MCF 10A (cell line): ENCODE measurements at regions of chr13 and their contacts with region 1.

Region 1: DNA sequence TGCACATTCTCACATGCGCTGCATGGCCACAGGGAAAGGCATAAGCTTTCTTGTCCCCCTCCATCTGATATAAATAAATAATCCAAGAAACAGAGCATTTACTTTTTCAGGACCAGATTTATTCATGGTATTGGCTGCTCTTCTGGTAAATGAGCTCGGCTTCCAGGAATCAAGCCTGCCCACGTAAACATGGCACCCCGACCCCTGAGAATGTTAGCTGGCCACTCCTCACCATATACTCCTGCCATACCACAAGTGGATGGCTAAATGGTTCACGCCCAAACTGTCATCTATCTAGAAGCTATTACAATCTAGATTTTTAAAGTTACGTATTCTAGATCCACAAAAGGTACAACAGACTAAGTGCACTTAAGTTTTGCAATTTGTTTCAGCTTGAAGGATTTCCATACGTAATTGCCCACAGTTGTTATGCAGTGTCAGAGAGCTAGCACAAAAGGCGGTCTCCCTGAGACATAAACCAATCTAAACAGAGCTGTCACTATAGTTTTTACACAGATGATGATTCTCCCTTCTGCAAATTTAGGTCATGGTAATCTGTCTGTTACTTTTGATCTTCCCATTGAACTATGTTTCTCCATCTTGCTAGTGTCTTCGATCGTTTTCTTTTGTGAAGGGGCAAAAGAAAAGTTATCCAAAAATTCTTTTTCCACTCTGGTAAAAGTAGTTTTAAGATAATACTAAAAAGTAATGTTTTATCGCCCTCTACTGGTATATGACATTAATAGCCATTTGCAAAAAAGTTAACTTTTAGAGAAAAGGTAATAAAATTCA is 16.2 kb upstream of the FOXO1 start:
- DNase-seq: peak; percentile 25
- H3K4me3 Mint-ChIP-seq: no peak overlapping the region
- H3K27ac Mint-ChIP-seq: peak overlapping the region; percentile 13
- H3K4me1 Mint-ChIP-seq: peaks cover 14% of the 10 kb centered on the region
- H3K27me3 Mint-ChIP-seq: no peaks in the 10 kb centered on the region
- CTCF ChIP-seq: peak; percentile 49

Region 2: GRCh38 chr13:39684531-39685137 is 998.0 kb before region 1 on chr13:
- CTCF ChIA-PET with region 1: interaction called, 84 read pairs
- POLR2A ChIA-PET with region 1: interaction called, 3 read pairs
- intact Hi-C with region 1: loop called (anchors 2 kb)
- DNase-seq: peak; percentile 39
- H3K4me3 Mint-ChIP-seq: no peak overlapping the region
- H3K27ac Mint-ChIP-seq: no peak overlapping the region
- H3K4me1 Mint-ChIP-seq: no peaks in the 10 kb centered on the region
- H3K27me3 Mint-ChIP-seq: no peaks in the 10 kb centered on the region
- CTCF ChIP-seq: peak; percentile 18

Region 3: GRCh38 chr13:39765801-39766463 is 916.7 kb before region 1 on chr13:
- CTCF ChIA-PET with region 1: interaction called, 42 read pairs
- POLR2A ChIA-PET with region 1: no interaction called
- intact Hi-C with region 1: loop called (anchors 5 kb)
- DNase-seq: peak; percentile 91
- H3K4me3 Mint-ChIP-seq: no peak overlapping the region
- H3K27ac Mint-ChIP-seq: no peak overlapping the region
- H3K4me1 Mint-ChIP-seq: peaks cover 32% of the 10 kb centered on the region
- H3K27me3 Mint-ChIP-seq: no peaks in the 10 kb centered on the region
- CTCF ChIP-seq: peak; percentile 48

Region 4: DNA sequence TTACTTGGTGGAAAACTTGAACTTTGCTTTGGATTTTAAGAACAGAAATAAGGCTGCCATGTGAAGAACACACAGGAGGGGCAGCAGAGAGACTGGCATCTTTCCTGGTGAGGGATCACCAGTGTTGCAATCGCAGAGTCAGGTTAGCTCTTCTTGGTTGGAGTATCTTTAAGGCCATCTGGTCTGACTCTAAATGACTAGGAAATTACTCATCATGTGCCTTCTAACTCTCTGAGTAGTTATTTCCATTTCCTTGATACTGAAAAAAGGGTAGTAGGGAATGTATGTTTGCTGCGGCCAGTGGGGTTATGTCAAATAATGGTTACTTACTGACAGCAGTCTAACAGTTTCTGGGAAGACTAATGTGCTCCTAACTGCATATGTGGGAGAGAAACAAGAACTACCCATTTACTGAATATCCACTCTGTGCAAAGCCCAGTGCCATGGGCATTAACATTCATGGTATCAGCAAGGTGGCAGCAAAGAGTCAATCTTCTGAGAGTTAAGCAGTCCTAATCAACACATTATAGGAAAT is 905.1 kb before region 1 on chr13:
- CTCF ChIA-PET with region 1: interaction called, 50 read pairs
- POLR2A ChIA-PET with region 1: interaction called, 10 read pairs
- intact Hi-C with region 1: loop called (anchors 2 kb)
- DNase-seq: peak; percentile 90
- H3K4me3 Mint-ChIP-seq: no peak overlapping the region
- H3K27ac Mint-ChIP-seq: peak overlapping the region; percentile 31
- H3K4me1 Mint-ChIP-seq: peaks cover 10% of the 10 kb centered on the region
- H3K27me3 Mint-ChIP-seq: no peaks in the 10 kb centered on the region
- CTCF ChIP-seq: peak; percentile 23

Region 5: GRCh38 chr13:39783050-39783449 is 899.6 kb before region 1 on chr13:
- CTCF ChIA-PET with region 1: interaction called, 50 read pairs
- POLR2A ChIA-PET with region 1: interaction called, 10 read pairs
- intact Hi-C with region 1: loop called (anchors 2 kb)
- DNase-seq: peak; percentile 36
- H3K4me3 Mint-ChIP-seq: no peak overlapping the region
- H3K27ac Mint-ChIP-seq: no peak overlapping the region
- H3K4me1 Mint-ChIP-seq: peaks cover 6% of the 10 kb centered on the region
- H3K27me3 Mint-ChIP-seq: no peaks in the 10 kb centered on the region
- CTCF ChIP-seq: peak; percentile 40

Region 6: GRCh38 chr13:40580566-40581276 is 101.9 kb before region 1 on chr13:
- CTCF ChIA-PET with region 1: no interaction called
- POLR2A ChIA-PET with region 1: no interaction called
- intact Hi-C with region 1: no loop called
- DNase-seq: no peak
- H3K4me3 Mint-ChIP-seq: no peak overlapping the region
- H3K27ac Mint-ChIP-seq: no peak overlapping the region
- H3K4me1 Mint-ChIP-seq: peaks cover 48% of the 10 kb centered on the region
- H3K27me3 Mint-ChIP-seq: no peaks in the 10 kb centered on the region
- CTCF ChIP-seq: no peak

Region 7: GRCh38 chr13:40671956-40672764 is 10.5 kb before region 1 on chr13:
- CTCF ChIA-PET with region 1: interaction called, 15 read pairs
- POLR2A ChIA-PET with region 1: interaction called, 5 read pairs
- intact Hi-C with region 1: no loop called
- DNase-seq: peak; percentile 90
- H3K4me3 Mint-ChIP-seq: no peak overlapping the region
- H3K27ac Mint-ChIP-seq: peak overlapping the region; percentile 22
- H3K4me1 Mint-ChIP-seq: peaks cover 29% of the 10 kb centered on the region
- H3K27me3 Mint-ChIP-seq: no peaks in the 10 kb centered on the region
- CTCF ChIP-seq: no peak